CD4-positive, alpha-beta memory T cell (primary cell): ENCODE measurements at regions of chr10 and their contacts with region 1.

Region 1: GRCh38 chr10:91298224-91298871 is 77.9 kb downstream of the PCGF5 start:
- DNase-seq: peak; percentile 75 to 80 (median 77)
- H3K4me3 ChIP-seq: peak overlapping the region; percentile 30 to 55
- H3K4me3 Mint-ChIP-seq: peak overlapping the region; percentile 66 to 81 (median 74)
- H3K27ac ChIP-seq: no peak overlapping the region
- H3K27ac Mint-ChIP-seq: peak overlapping the region in 3 of 7 donors; percentile 3 to 91 (median 59)
- H3K4me1 ChIP-seq: peaks cover 11% of the 10 kb centered on the region
- H3K4me1 Mint-ChIP-seq: peaks cover 0 to 10% (median 7%) of the 10 kb centered on the region in 4 donors
- H3K27me3 ChIP-seq: no peaks in the 10 kb centered on the region
- H3K27me3 Mint-ChIP-seq: peaks cover 2 to 9% of the 10 kb centered on the region in 2 donors

Region 2: GRCh38 chr10:91006001-91006751 is 292.2 kb before region 1 on chr10:
- CTCF ChIA-PET with region 1: interaction called, 18 read pairs
- POLR2A ChIA-PET with region 1: no interaction called
- intact Hi-C with region 1: no loop called
- DNase-seq: peak; percentile 60 to 73 (median 67)
- H3K4me3 ChIP-seq: no peak overlapping the region
- H3K4me3 Mint-ChIP-seq: peak overlapping the region; percentile 40 to 89 (median 73)
- H3K27ac ChIP-seq: no peak overlapping the region
- H3K27ac Mint-ChIP-seq: peak overlapping the region; percentile 30 to 88 (median 74)
- H3K4me1 ChIP-seq: peaks cover 18% of the 10 kb centered on the region
- H3K4me1 Mint-ChIP-seq: peaks cover 11 to 21% (median 16%) of the 10 kb centered on the region in 4 donors
- H3K27me3 ChIP-seq: no peaks in the 10 kb centered on the region
- H3K27me3 Mint-ChIP-seq: peaks cover 0 to under 1% of the 10 kb centered on the region in 2 donors

Region 3: DNA sequence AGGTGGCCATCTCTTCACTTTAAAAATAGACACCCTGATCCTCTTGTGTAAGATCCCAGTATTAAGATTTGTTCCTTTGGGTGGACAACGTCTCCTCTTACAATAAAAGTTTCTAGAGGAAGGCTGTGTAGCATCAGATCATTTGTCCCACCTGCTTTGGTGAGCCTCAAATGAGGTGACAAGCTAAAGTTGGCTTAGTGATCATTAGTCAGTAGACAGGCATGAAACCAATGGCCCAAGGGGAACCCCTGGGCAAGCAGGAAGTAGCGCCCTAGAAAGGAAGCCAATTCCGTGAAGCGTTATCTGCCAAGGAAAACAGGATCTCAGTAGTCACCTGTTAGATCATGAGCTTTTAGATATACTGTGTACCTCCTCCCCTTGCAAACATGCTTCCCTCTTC is 11.1 kb before region 1 on chr10:
- CTCF ChIA-PET with region 1: interaction called, 42 read pairs
- POLR2A ChIA-PET with region 1: no interaction called
- intact Hi-C with region 1: no loop called
- DNase-seq: no peak
- H3K4me3 ChIP-seq: no peak overlapping the region
- H3K4me3 Mint-ChIP-seq: no peak overlapping the region
- H3K27ac ChIP-seq: no peak overlapping the region
- H3K27ac Mint-ChIP-seq: no peak overlapping the region
- H3K4me1 ChIP-seq: peaks cover 6% of the 10 kb centered on the region
- H3K4me1 Mint-ChIP-seq: peaks cover 0 to 4% (median 1%) of the 10 kb centered on the region in 4 donors
- H3K27me3 ChIP-seq: no peaks in the 10 kb centered on the region
- H3K27me3 Mint-ChIP-seq: no peaks in the 10 kb centered on the region

Region 4: DNA sequence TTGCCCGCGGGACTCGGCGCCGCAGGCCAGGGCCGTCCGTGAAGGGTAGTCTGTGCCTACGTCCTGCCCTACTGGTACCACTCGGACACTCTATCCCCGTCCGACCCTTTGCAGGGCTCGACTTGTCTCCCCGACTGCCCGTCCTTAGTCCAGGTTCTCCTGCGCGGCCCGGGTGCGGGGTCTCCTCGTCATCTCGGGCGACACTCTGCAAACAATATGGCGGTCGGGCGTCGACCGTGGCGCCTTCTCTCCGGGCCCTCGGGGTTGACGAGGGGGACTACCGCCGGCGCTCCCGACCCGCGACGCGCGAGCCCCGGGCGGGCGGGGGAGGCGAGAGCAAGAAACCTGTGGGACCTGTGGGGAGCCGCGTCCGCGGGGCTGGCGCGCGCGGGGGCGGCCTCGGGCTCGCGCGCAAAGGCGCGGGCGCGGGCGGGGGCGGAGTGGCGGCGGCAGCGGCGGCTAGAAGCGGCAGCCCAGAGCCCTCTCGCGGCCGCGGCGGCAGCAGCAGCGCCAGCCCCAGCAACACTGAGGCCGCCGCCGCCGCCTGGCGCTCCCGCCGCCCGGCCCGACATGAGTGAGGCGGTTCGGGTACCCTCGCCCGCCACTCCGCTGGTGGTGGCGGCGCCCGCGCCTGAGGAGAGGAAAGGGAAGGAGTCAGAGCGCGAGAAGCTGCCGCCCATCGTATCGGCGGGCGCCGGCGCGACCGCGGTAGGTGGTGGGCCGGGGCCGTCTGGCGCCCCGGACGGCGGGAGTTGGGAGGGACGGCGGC is 111.7 kb after region 1 on chr10 and contains the start of gene HECTD2:
- CTCF ChIA-PET with region 1: interaction called, 8 read pairs
- POLR2A ChIA-PET with region 1: no interaction called
- intact Hi-C with region 1: loop called (anchors 1 kb)
- DNase-seq: peak; percentile 78 to 90 (median 88)
- H3K4me3 ChIP-seq: peak within 1 kb of the TSS; percentile 88 to 92
- H3K4me3 Mint-ChIP-seq: peak within 1 kb of the TSS; percentile 88 to 97 (median 91)
- H3K27ac ChIP-seq: peak within 1 kb of the TSS; percentile 74
- H3K27ac Mint-ChIP-seq: peak within 1 kb of the TSS; percentile 78 to 97 (median 95)
- H3K4me1 ChIP-seq: peaks cover 20% of the 10 kb centered on the region
- H3K4me1 Mint-ChIP-seq: peaks cover 7 to 15% (median 11%) of the 10 kb centered on the region in 4 donors
- H3K27me3 ChIP-seq: no peaks in the 10 kb centered on the region
- H3K27me3 Mint-ChIP-seq: peaks cover 0 to under 1% of the 10 kb centered on the region in 2 donors
- total RNA-seq, gene HECTD2: 2.6 to 2.7 TPM

Region 5: GRCh38 chr10:91434041-91434440 is 135.7 kb after region 1 on chr10:
- CTCF ChIA-PET with region 1: no interaction called
- POLR2A ChIA-PET with region 1: no interaction called
- intact Hi-C with region 1: no loop called
- DNase-seq: no peak
- H3K4me3 ChIP-seq: no peak overlapping the region
- H3K4me3 Mint-ChIP-seq: no peak overlapping the region
- H3K27ac ChIP-seq: no peak overlapping the region
- H3K27ac Mint-ChIP-seq: no peak overlapping the region
- H3K4me1 ChIP-seq: no peaks in the 10 kb centered on the region
- H3K4me1 Mint-ChIP-seq: no peaks in the 10 kb centered on the region
- H3K27me3 ChIP-seq: no peaks in the 10 kb centered on the region
- H3K27me3 Mint-ChIP-seq: no peaks in the 10 kb centered on the region

Region 6: DNA sequence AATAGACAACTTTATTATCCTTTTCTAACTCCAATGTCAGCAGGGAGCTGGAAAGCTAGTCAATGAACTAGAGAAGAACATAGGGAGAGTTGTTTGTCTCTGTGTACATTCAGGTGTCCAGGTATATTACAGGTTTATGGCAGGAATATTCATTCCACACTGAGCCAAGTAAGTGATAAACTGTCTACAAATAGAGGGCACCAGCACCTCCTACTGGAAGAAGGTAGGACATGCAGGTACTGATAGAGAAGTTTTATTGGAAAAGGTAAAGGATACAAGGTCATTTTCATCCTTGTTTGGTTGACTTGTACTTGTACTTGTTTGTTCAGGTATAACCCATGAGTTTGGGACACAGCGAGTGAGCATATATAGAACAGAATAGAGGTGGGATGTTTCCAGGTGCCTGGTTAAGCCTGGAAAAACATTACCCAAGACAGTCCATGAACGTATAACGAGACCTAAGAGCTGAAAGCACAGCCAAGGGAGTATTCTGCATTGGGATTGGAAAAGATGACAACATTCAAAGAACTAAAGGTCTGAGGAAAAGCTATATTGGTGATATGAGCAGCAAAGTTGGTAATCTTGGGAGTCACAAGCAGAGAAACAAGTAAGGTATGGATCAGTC is 395.9 kb after region 1 on chr10:
- CTCF ChIA-PET with region 1: interaction called, 15 read pairs
- POLR2A ChIA-PET with region 1: no interaction called
- intact Hi-C with region 1: loop called (anchors 1 kb)
- DNase-seq: peak in 3 of 5 donors; percentile 8 to 11 (median 9)
- H3K4me3 ChIP-seq: no peak overlapping the region
- H3K4me3 Mint-ChIP-seq: no peak overlapping the region
- H3K27ac ChIP-seq: no peak overlapping the region
- H3K27ac Mint-ChIP-seq: no peak overlapping the region
- H3K4me1 ChIP-seq: no peaks in the 10 kb centered on the region
- H3K4me1 Mint-ChIP-seq: peaks cover 0 to 1% (median 0%) of the 10 kb centered on the region in 4 donors
- H3K27me3 ChIP-seq: no peaks in the 10 kb centered on the region
- H3K27me3 Mint-ChIP-seq: peaks cover 0 to 4% of the 10 kb centered on the region in 2 donors

Region 7: DNA sequence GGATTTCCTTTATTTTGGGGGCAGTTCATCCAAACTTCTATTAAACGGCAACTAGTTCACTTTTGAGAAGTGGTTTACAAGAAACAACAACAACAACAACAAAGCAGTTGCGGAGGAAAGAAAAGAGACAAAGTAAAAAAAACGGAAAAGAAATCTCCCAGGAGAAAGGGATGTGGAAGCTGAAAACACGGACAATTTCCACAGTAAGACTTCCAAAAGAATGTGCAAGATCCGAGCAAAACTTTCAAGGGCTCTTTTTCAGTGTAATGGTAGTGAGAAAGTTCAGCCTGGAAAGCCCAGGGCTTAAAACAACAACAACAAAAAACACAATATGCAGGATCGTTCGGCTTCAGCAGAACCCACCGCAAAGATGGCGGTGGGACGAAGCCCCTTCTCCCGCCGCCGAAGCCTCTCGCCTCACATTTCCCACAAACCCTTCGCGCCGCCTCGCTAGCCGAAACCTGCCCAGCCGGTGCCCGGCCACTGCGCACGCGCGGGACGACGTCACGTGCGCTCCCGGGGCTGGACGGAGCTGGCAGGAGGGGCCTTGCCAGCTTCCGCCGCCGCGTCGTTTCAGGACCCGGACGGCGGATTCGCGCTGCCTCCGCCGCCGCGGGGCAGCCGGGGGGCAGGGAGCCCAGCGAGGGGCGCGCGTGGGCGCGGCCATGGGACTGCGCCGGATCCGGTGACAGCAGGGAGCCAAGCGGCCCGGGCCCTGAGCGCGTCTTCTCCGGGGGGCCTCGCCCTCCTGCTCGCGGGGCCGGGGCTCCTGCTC is 499.7 kb after region 1 on chr10 and contains the start of gene TNKS2:
- CTCF ChIA-PET with region 1: interaction called, 3 read pairs
- POLR2A ChIA-PET with region 1: no interaction called
- intact Hi-C with region 1: loop called (anchors 5 kb)
- DNase-seq: peak; percentile 88 to 93 (median 92)
- H3K4me3 ChIP-seq: peak within 1 kb of the TSS; percentile 83
- H3K4me3 Mint-ChIP-seq: peak within 1 kb of the TSS; percentile 91 to 99 (median 99)
- H3K27ac ChIP-seq: peak within 1 kb of the TSS; percentile 90
- H3K27ac Mint-ChIP-seq: peak within 1 kb of the TSS; percentile 92 to 100 (median 98)
- H3K4me1 ChIP-seq: peaks cover 53% of the 10 kb centered on the region
- H3K4me1 Mint-ChIP-seq: peaks cover 50 to 72% (median 62%) of the 10 kb centered on the region in 4 donors
- H3K27me3 ChIP-seq: no peaks in the 10 kb centered on the region
- H3K27me3 Mint-ChIP-seq: no peaks in the 10 kb centered on the region
- total RNA-seq, gene TNKS2: 65.5 to 70.0 TPM